Left ventricle myocardium inferior (tissue), 1 donor: ENCODE measurements at regions of chr10 and their contacts with region 1.

Region 1: DNA sequence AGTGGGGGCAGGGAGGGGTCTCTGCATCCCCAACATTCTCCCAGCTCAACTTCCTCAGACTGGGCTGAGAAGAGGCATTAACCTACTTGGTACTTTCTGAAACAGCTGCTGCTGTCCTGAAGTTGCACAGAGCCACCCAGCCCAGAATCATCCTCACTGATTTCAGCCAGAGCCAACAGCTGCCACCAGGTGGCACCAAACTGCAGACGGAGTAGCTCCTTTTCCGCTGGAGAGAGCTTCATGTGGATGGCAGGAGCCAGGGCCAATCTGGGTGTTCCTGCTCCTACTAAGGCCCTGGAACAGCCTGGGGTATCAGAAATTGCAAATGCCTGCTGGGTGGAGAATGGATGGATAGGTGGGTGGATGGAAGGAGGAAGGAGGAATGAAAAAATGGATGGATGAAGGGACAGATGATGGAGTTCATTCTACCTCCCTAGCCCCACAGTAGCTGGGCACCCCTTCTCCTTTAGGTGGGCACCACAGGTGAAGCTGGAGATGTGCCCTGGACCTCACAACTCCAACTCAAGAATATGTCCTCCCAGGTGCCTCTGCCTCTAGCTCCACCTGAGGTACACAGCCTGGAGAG is 11.8 kb upstream of the DRGX start:
- DNase-seq: peak; percentile 78
- H3K4me3 ChIP-seq: no peak overlapping the region
- H3K27ac ChIP-seq: no peak overlapping the region
- H3K4me1 ChIP-seq: peaks cover 32% of the 10 kb centered on the region
- H3K27me3 ChIP-seq: peaks cover 47% of the 10 kb centered on the region
- CTCF ChIP-seq: peak; percentile 93

Region 2: GRCh38 chr10:49518982-49519578 is 111.4 kb after region 1 on chr10:
- intact Hi-C with region 1: loop called (anchors 10 kb)
- DNase-seq: no peak
- H3K4me3 ChIP-seq: no peak overlapping the region
- H3K27ac ChIP-seq: no peak overlapping the region
- H3K4me1 ChIP-seq: peaks cover 45% of the 10 kb centered on the region
- H3K27me3 ChIP-seq: no peaks in the 10 kb centered on the region
- CTCF ChIP-seq: peak; percentile 75